ENCODE measurements at regions of chr17 and their contacts with region 1.

Region 1: GRCh38 chr17:29444589-29444988 is 54.4 kb downstream of the TAOK1 start:
- DNase-seq: no peak
- ATAC-seq: no peak
- H3K4me3 ChIP-seq: no peak overlapping the region
- H3K4me3 Mint-ChIP-seq: no peak overlapping the region
- H3K27ac ChIP-seq: no peak overlapping the region
- H3K27ac Mint-ChIP-seq: peak overlapping the region in 1 of 2 donors; percentile 44
- H3K4me1 ChIP-seq: peaks cover 7 to 12% of the 10 kb centered on the region in 2 experiments
- H3K4me1 Mint-ChIP-seq: peaks cover 72 to 74% (median 74%) of the 10 kb centered on the region in 3 donors
- H3K27me3 ChIP-seq: no peaks in the 10 kb centered on the region
- H3K27me3 Mint-ChIP-seq: no peaks in the 10 kb centered on the region

Region 2: DNA sequence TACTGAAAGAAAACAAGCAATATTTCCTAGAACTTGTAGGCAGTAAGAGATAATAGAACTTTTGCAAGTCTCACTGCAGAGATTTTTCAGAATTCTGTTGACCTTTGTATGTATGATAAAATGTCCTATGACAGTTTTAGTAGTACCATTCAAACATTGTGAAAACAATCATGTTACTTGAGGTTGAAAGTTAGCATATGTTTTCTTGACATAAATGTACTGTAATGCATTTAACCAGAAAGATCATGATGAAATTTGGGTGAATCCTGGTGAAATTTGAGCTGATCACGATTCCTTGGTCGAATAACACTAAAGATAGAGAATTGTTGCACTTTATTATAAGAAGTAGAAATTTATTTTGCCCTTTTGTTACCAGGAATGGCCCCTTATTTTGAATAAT is 31.3 kb after region 1 on chr17:
- CTCF ChIA-PET with region 1: no interaction called
- POLR2A ChIA-PET with region 1: interaction called in 1 of 2 experiments, 12 read pairs
- DNase-seq: no peak
- ATAC-seq: no peak
- H3K4me3 ChIP-seq: no peak overlapping the region
- H3K4me3 Mint-ChIP-seq: no peak overlapping the region
- H3K27ac ChIP-seq: no peak overlapping the region
- H3K27ac Mint-ChIP-seq: no peak overlapping the region
- H3K4me1 ChIP-seq: no peaks in the 10 kb centered on the region
- H3K4me1 Mint-ChIP-seq: peaks cover 0 to 2% (median 0%) of the 10 kb centered on the region in 3 donors
- H3K27me3 ChIP-seq: no peaks in the 10 kb centered on the region
- H3K27me3 Mint-ChIP-seq: no peaks in the 10 kb centered on the region

Region 3: DNA sequence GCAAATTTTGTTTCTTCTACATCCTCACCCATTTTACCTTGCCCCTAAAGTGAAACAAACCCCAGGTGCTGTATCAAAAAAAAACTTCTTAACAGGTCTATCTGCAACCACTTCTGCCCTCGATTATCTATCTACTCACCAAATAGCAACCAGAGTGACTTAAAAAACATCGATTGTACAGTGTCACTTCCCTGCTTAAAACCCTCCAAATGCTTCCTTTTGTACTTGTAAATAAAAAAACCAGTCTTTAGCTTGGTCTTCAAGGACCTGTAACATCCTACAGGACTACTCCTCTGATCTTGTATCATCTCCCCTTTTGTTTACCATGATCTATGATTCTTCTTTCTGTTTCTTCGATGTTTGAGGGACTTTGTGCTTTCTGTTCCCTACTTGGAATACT is 260.8 kb after region 1 on chr17:
- CTCF ChIA-PET with region 1: no interaction called
- POLR2A ChIA-PET with region 1: interaction called in 1 of 2 experiments, 11 read pairs
- DNase-seq: peak in 1 of 35 experiments; percentile 45
- ATAC-seq: peak in 2 of 4 experiments; percentile 3 to 17
- H3K4me3 ChIP-seq: peak overlapping the region in 1 of 2 donors; percentile 8
- H3K4me3 Mint-ChIP-seq: peak overlapping the region; percentile 48 to 84 (median 56)
- H3K27ac ChIP-seq: peak overlapping the region; percentile 96
- H3K27ac Mint-ChIP-seq: peak overlapping the region; percentile 91 to 98
- H3K4me1 ChIP-seq: peaks cover 31 to 35% of the 10 kb centered on the region in 2 experiments
- H3K4me1 Mint-ChIP-seq: peaks cover 51 to 60% (median 51%) of the 10 kb centered on the region in 3 donors
- H3K27me3 ChIP-seq: no peaks in the 10 kb centered on the region
- H3K27me3 Mint-ChIP-seq: no peaks in the 10 kb centered on the region

Measured in T-cell (primary cell).